MCF 10A (cell line): ENCODE measurements at regions of chr2 and their contacts with region 1.

Region 1: GRCh38 chr2:235026649-235027557 is 75.1 kb downstream of the SH3BP4 start:
- DNase-seq: peak; percentile 99
- H3K4me3 Mint-ChIP-seq: peak overlapping the region; percentile 71
- H3K27ac Mint-ChIP-seq: peak overlapping the region; percentile 93
- H3K4me1 Mint-ChIP-seq: peaks cover 59% of the 10 kb centered on the region
- H3K27me3 Mint-ChIP-seq: no peaks in the 10 kb centered on the region
- CTCF ChIP-seq: no peak

Region 2: DNA sequence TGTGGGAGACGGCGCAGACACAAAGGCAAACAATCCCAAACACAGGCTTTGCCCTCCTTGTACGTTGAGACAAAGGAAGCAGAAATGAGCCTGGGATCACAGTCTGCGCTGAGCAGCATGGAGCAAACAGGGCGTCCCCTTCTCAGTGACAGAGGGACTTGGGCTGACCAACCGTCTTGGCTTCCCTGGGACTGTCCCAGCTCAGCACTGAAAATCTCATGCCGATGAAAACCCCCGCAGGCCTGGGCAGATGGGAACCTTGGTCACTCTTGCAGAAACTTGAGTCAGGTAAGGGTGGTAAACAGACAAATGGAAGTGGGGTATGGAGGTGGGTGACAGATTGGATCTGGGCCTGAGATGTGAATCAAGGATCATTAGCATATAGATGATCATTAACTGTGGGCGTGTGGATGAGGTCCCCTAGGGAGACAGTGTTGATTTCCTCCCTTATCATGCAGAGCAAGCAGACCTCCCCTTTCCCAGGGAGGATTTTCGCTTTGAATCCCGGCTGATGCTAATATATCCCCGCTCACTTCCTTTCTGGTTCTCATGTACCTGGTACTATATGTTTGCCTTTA is 94.2 kb before region 1 on chr2:
- CTCF ChIA-PET with region 1: no interaction called
- POLR2A ChIA-PET with region 1: no interaction called
- intact Hi-C with region 1: no loop called
- DNase-seq: no peak
- H3K4me3 Mint-ChIP-seq: no peak overlapping the region
- H3K27ac Mint-ChIP-seq: no peak overlapping the region
- H3K4me1 Mint-ChIP-seq: no peaks in the 10 kb centered on the region
- H3K27me3 Mint-ChIP-seq: peaks cover 13% of the 10 kb centered on the region
- CTCF ChIP-seq: no peak

Region 3: GRCh38 chr2:234957843-234958135 is 69.1 kb before region 1 on chr2:
- CTCF ChIA-PET with region 1: interaction called, 3 read pairs
- POLR2A ChIA-PET with region 1: interaction called, 98 read pairs
- intact Hi-C with region 1: loop called (anchors 1 kb)
- DNase-seq: no peak
- H3K4me3 Mint-ChIP-seq: peak overlapping the region; percentile 20
- H3K27ac Mint-ChIP-seq: peak overlapping the region; percentile 80
- H3K4me1 Mint-ChIP-seq: peaks cover 52% of the 10 kb centered on the region
- H3K27me3 Mint-ChIP-seq: no peaks in the 10 kb centered on the region
- CTCF ChIP-seq: no peak

Region 4: DNA sequence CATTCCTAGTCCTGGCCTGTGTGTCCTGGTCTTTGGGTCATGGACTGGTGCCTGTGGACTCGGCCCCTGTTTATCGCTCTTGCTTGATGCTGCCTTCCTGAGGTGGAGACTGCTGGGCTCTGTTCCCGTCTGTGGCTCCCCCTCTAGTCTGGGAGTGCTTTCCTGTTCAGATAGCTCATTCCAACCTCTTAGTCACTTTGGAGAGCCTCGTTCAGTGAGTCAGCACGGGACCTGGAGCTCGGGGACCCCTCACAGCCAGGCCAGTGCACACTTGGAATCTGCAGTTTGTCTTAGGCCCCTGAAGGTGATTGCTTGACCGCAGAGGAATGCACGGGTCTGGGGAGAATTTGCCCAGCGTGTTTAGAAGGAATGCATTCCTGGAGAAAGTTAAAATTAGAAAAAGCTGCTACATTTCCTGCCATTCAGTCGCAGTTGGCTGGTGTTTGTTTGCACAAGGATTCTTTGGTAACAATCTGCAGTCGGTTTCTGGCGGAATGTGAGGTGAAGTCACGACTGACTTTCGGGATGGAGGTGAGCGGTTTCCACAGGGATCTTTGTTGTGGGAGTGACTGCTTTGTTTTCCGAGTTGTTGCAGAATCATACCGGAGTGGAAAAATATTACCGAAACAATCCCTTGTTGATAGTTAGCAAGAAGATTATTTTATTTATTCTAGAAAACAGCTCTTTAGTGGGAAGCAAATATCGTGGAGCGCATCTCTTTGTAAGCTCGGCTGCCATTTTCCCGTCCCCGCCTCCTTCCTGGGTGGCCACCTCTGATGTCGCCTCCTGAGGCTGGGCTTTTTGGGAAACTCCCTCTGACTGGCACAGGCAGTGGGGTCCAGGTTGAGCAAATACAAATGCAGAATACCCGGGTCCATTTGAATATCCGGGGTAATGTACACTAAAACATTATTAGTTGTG is 45.4 kb before region 1 on chr2:
- CTCF ChIA-PET with region 1: interaction called, 6 read pairs
- POLR2A ChIA-PET with region 1: interaction called, 16 read pairs
- intact Hi-C with region 1: loop called (anchors 5 kb)
- DNase-seq: peak; percentile 95
- H3K4me3 Mint-ChIP-seq: peak overlapping the region; percentile 71
- H3K27ac Mint-ChIP-seq: peak overlapping the region; percentile 90
- H3K4me1 Mint-ChIP-seq: peaks cover 45% of the 10 kb centered on the region
- H3K27me3 Mint-ChIP-seq: no peaks in the 10 kb centered on the region
- CTCF ChIP-seq: no peak